GM12878 (cell line): ENCODE measurements at regions of chr16 and their contacts with region 1.

Region 1: DNA sequence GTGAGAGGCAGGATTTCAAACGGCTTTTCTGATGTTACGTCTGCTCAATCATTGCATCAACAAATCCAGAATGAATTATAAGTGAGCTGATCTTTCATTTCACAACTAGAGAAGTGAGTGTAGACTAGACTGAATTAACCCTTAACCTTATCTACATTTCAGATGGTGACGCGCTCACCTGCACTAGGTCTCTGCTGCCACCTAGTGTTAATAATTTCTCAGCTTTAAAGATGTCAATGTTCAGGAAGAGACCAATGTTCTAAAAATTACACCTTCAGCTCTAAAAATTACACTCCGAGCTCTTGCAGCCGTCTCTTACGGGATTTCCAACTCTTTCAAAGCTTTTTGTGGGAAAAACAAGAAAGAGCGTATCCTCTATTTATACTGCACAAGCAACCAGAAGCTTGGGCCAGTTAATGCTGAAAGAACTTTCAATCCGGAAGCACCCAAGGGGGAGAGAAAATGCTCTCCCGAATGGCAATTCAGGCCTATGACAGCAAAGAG is 88.2 kb upstream of the FA2H start:
- DNase-seq: peak; percentile 45
- ATAC-seq: peak; percentile 97
- H3K4me3 ChIP-seq: no peak overlapping the region
- H3K27ac ChIP-seq: no peak overlapping the region
- H3K4me1 ChIP-seq: no peaks in the 10 kb centered on the region
- H3K27me3 ChIP-seq: no peaks in the 10 kb centered on the region
- CTCF ChIP-seq: peak; percentile 64 to 91 (median 73)
- EP300 ChIP-seq: no peak
- POLR2A ChIP-seq: no peak
- RAD21 ChIP-seq: peak; percentile 93

Region 2: DNA sequence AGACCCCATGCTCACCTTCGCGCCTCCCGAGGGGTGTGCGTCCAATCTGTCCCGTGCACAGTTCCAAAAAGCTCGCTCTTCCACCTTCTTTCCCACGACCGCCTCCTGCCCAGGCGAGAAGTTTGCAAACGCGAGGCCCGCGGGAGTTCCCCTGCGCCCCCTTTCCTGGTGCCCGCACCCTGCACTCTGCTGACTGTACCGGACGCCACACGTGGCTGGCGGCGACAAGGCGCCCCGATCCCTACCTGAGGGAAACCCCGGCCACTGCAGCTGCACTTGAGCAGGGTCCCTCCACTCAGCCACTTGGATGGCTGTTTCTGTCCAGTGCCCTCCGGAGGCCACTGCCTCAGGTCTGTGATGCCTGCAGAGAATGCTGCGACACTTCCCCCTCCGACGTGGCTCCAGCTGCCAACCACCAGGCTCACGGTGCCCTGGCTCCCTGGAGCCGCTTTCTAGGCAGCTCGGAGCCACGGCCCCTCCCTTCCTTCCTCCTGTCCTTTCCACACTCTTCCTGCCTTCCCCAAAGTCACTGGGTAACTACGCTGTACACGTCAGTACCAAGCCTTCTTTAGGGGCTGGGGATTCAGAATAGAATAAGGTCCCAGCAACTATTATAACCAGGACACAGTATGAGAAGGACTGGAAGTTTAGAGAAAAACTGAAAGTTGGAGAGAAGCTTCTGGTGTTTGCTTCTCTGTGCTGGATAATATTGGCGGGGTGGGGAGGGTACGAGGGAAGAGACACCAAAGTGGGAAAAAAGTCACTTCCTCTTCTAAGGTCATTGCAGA is 162.2 kb before region 1 on chr16 and contains the start of gene MLKL:
- CTCF ChIA-PET with region 1: interaction called, 190 read pairs
- POLR2A ChIA-PET with region 1: interaction called, 4 read pairs
- RAD21 ChIA-PET with region 1: interaction called, 14 read pairs
- SMC1A ChIA-PET with region 1: interaction called, 28 read pairs
- in situ Hi-C with region 1: no loop called
- intact Hi-C with region 1: no loop called
- DNase-seq: peak; percentile 11
- ATAC-seq: peak; percentile 78
- H3K4me3 ChIP-seq: peak within 1 kb of the TSS; percentile 79
- H3K27ac ChIP-seq: peak within 1 kb of the TSS; percentile 97
- H3K4me1 ChIP-seq: peaks cover 9% of the 10 kb centered on the region
- H3K27me3 ChIP-seq: no peaks in the 10 kb centered on the region
- CTCF ChIP-seq: peak in 1 of 3 experiments; percentile 1; a peak in 1 of 6 replicates
- EP300 ChIP-seq: no peak
- POLR2A ChIP-seq: peak; percentile 82
- RAD21 ChIP-seq: no peak
- polyA plus RNA-seq, gene MLKL: 3.8 to 5.2 TPM

Region 3: GRCh38 chr16:74774203-74775116 is 88.3 kb before region 1 on chr16 and contains the start of gene FA2H:
- CTCF ChIA-PET with region 1: interaction called, 35 read pairs
- POLR2A ChIA-PET with region 1: no interaction called
- RAD21 ChIA-PET with region 1: interaction called, 3 read pairs
- SMC1A ChIA-PET with region 1: no interaction called
- in situ Hi-C with region 1: no loop called
- intact Hi-C with region 1: no loop called
- DNase-seq: no peak
- ATAC-seq: peak; percentile 93
- H3K4me3 ChIP-seq: peak within 1 kb of the TSS; percentile 71; the same call in 1 of the 2 replicates
- H3K27ac ChIP-seq: no peak within 1 kb of the TSS
- H3K4me1 ChIP-seq: peaks cover 18% of the 10 kb centered on the region
- H3K27me3 ChIP-seq: peaks cover 0 to 5% of the 10 kb centered on the region in 2 experiments
- CTCF ChIP-seq: peak in 2 of 3 experiments; percentile 13 to 14; a peak in 2 of 6 replicates
- EP300 ChIP-seq: no peak
- POLR2A ChIP-seq: peak; percentile 53; the same call in 1 of the 2 replicates
- RAD21 ChIP-seq: no peak
- polyA plus RNA-seq, gene FA2H: 0.05 TPM in 1 of 2 experiments, not detected in the other

Region 4: DNA sequence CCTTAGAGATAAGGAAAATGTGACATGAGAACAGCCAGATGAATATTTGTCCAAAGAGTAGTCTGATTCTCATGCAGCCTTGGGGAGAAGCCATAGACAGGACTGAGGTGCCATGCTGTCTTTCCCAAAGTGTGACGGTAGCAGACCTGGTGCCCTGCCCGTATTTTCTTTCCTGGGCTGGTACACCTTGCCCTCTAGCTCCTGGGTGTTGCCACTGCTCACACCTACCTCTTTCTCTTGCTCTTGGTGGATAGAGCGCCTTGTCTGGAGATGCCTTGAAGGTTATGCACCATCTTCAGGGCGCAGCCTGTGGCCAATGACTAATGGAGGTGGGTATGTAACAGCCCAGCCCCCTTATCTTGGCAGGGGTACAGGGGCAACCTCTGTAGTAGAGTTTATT is 41.9 kb before region 1 on chr16:
- CTCF ChIA-PET with region 1: interaction called, 116 read pairs
- POLR2A ChIA-PET with region 1: interaction called, 4 read pairs
- RAD21 ChIA-PET with region 1: interaction called, 81 read pairs
- SMC1A ChIA-PET with region 1: interaction called, 77 read pairs
- in situ Hi-C with region 1: no loop called
- intact Hi-C with region 1: no loop called
- DNase-seq: no peak
- ATAC-seq: no peak
- H3K4me3 ChIP-seq: no peak overlapping the region
- H3K27ac ChIP-seq: no peak overlapping the region
- H3K4me1 ChIP-seq: no peaks in the 10 kb centered on the region
- H3K27me3 ChIP-seq: peaks cover 0 to 3% of the 10 kb centered on the region in 2 experiments; a peak in 2 of 4 replicates
- CTCF ChIP-seq: no peak
- EP300 ChIP-seq: no peak
- POLR2A ChIP-seq: no peak
- RAD21 ChIP-seq: no peak

Region 5: DNA sequence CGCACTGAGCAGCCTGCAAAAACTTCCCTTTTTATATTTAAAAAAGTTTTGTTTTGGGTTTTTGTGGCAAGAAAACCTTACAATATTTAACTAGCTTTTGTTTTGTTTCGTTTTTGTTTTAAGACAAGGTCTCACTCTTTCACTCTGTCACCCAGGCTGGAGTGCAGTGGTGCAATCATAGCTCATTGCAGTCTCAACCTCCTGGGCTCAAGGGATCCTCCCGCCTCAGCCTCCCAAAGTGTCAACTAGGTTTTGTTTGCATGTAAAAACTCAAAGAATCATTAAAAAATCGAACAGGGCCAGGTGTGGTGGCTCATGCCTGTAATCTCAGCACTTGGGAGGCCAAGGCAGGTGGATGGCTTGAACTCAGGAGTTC is 10.3 kb before region 1 on chr16:
- CTCF ChIA-PET with region 1: interaction called, 20 read pairs
- POLR2A ChIA-PET with region 1: no interaction called
- RAD21 ChIA-PET with region 1: interaction called, 3 read pairs
- SMC1A ChIA-PET with region 1: interaction called, 11 read pairs
- in situ Hi-C with region 1: no loop called
- intact Hi-C with region 1: no loop called
- DNase-seq: no peak
- ATAC-seq: no peak
- H3K4me3 ChIP-seq: no peak overlapping the region
- H3K27ac ChIP-seq: no peak overlapping the region
- H3K4me1 ChIP-seq: no peaks in the 10 kb centered on the region
- H3K27me3 ChIP-seq: no peaks in the 10 kb centered on the region
- CTCF ChIP-seq: no peak
- EP300 ChIP-seq: no peak
- POLR2A ChIP-seq: no peak
- RAD21 ChIP-seq: no peak

Region 6: DNA sequence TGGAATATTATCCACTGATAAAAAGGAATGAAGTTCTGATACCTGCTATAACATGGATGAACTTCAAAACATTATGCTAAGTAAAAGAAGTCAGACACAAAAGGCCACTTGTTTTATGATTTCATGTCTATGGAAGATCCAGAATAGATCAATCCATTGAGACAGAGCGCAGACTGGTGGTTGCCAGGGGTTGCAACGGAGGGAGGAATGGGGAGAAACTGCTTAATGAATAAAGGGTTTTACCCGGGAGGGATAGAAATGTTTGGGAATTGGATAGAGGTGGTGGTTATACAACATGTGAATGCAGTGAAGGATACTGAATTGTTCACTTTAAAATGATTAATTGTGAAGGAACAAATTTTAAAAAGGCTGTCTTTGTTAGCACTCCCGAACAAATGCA is 92.0 kb after region 1 on chr16:
- CTCF ChIA-PET with region 1: interaction called, 11 read pairs
- POLR2A ChIA-PET with region 1: no interaction called
- RAD21 ChIA-PET with region 1: interaction called, 3 read pairs
- SMC1A ChIA-PET with region 1: no interaction called
- in situ Hi-C with region 1: no loop called
- intact Hi-C with region 1: no loop called
- DNase-seq: no peak
- ATAC-seq: no peak
- H3K4me3 ChIP-seq: no peak overlapping the region
- H3K27ac ChIP-seq: no peak overlapping the region
- H3K4me1 ChIP-seq: no peaks in the 10 kb centered on the region
- H3K27me3 ChIP-seq: no peaks in the 10 kb centered on the region
- CTCF ChIP-seq: no peak
- EP300 ChIP-seq: no peak
- POLR2A ChIP-seq: no peak
- RAD21 ChIP-seq: no peak

Region 7: DNA sequence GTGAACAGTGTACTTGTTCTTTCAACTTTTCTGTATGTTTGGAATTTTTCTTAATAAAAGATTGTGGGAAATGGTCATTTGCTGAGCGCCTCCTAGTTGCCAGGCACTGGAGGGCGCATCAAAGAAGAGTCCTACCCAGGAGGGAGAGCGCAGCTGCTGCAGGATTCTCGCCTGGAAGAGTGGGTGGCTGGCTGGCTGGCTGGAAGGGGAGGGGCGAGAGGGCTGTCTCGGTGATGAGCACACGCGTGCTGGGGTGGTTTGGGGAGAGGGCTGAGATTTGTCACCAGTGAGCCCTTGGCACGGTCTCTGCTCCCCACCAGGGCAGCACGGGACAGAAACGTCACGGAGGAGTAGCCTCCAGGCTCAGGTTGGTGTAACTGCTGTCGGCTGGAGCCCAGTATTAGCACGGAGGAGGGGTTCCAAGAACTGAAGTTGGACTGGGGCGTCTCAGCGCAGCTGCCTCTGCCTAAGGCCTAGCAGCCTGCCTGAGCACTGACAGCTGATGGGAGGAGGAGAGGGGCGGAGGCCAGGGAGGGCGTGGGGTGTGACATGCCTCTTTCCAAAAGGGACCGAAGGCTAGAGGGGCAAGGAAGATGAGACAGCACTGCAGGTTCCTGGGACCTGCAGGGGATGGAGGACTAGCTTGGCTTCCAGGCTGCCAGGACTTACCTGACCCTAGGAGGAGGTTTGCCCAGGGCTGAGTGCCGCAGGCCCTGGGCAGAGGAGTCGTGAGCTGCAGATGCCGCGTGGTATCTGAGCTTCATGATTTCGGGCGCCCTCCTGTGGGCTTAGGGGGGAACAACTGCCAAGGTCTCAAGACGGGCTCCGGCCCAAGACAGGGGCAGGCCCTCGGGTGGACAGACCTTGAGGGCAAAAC is 248.1 kb after region 1 on chr16:
- CTCF ChIA-PET with region 1: interaction called, 58 read pairs
- POLR2A ChIA-PET with region 1: interaction called, 4 read pairs
- RAD21 ChIA-PET with region 1: interaction called, 38 read pairs
- SMC1A ChIA-PET with region 1: interaction called, 68 read pairs
- in situ Hi-C with region 1: no loop called
- intact Hi-C with region 1: loop called (anchors 2 kb)
- DNase-seq: peak; percentile 62
- ATAC-seq: peak; percentile 92
- H3K4me3 ChIP-seq: no peak overlapping the region
- H3K27ac ChIP-seq: no peak overlapping the region; the same call in 1 of the 2 replicates
- H3K4me1 ChIP-seq: peaks cover 36% of the 10 kb centered on the region
- H3K27me3 ChIP-seq: no peaks in the 10 kb centered on the region
- CTCF ChIP-seq: peak; percentile 95 to 97 (median 96)
- EP300 ChIP-seq: no peak
- POLR2A ChIP-seq: 0 out of 2 replicates have a peak, but pooled peaks have one; percentile 29
- RAD21 ChIP-seq: peak; percentile 97